H1 (cell line): ENCODE measurements at regions of chr3 and their contacts with region 1.

Region 1: GRCh38 chr3:107235928-107236315 is 141.3 kb upstream of the CCDC54 start:
- DNase-seq: no peak
- H3K4me3 ChIP-seq: no peak overlapping the region
- H3K27ac ChIP-seq: no peak overlapping the region
- H3K4me1 ChIP-seq: peaks cover 0 to 3% (median 0%) of the 10 kb centered on the region in 4 experiments; a peak in 1 of 7 replicates
- H3K27me3 ChIP-seq: peaks cover 0 to 3% (median 1%) of the 10 kb centered on the region in 4 experiments; a peak in 4 of 7 replicates
- CTCF ChIP-seq: peak in 2 of 3 experiments; percentile 72 to 75; a peak in 3 of 4 replicates
- EP300 ChIP-seq: no peak
- POLR2A ChIP-seq: no peak
- RAD21 ChIP-seq: peak; percentile 97

Region 2: DNA sequence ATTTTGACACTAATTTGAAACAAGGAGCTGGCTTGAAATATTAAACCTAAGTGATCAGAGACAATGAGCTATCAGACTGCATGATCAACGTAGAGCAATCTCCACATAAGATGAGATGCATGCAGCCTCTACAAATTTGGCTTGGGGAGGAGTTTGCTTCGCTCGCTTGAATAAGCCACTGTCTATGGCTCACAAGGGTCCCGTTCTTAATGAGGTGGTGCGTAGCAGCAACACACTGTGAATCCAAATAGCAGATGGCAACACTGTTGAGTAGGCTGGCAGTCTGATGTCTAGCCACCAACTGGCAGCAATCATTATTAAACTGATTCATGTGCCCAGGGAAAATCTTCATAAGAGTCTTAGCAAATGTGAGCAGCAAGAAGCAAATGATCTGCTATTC is 15.9 kb after region 1 on chr3:
- CTCF ChIA-PET with region 1: interaction called, 16 read pairs
- POLR2A ChIA-PET with region 1: interaction called, 3 read pairs
- DNase-seq: no peak
- H3K4me3 ChIP-seq: no peak overlapping the region
- H3K27ac ChIP-seq: no peak overlapping the region
- H3K4me1 ChIP-seq: no peaks in the 10 kb centered on the region
- H3K27me3 ChIP-seq: no peaks in the 10 kb centered on the region
- CTCF ChIP-seq: no peak
- EP300 ChIP-seq: no peak
- POLR2A ChIP-seq: no peak
- RAD21 ChIP-seq: no peak

Region 3: DNA sequence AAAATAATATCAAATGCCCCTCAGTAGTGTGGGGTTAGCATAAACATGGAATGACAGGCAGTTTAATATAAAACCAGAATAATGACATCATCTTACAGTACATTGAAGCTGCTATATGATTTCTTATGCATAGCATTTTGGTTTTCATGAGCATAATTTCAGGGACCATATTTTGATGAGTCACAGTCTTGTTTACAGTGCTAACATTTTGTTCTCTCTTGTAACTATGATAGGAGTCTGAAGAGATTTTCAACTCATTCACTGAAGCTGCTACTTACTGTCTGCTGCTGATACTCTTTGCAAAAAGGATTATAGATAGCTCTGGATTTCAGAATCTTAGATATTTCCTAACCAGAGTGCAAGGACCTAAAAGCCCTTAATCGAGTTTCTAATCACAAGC is 48.7 kb after region 1 on chr3:
- CTCF ChIA-PET with region 1: interaction called, 11 read pairs
- POLR2A ChIA-PET with region 1: no interaction called
- DNase-seq: no peak
- H3K4me3 ChIP-seq: no peak overlapping the region
- H3K27ac ChIP-seq: no peak overlapping the region
- H3K4me1 ChIP-seq: peaks cover 0 to 17% (median 8%) of the 10 kb centered on the region in 4 experiments; a peak in 6 of 7 replicates
- H3K27me3 ChIP-seq: no peaks in the 10 kb centered on the region
- CTCF ChIP-seq: no peak
- EP300 ChIP-seq: no peak
- POLR2A ChIP-seq: no peak
- RAD21 ChIP-seq: no peak

Region 4: DNA sequence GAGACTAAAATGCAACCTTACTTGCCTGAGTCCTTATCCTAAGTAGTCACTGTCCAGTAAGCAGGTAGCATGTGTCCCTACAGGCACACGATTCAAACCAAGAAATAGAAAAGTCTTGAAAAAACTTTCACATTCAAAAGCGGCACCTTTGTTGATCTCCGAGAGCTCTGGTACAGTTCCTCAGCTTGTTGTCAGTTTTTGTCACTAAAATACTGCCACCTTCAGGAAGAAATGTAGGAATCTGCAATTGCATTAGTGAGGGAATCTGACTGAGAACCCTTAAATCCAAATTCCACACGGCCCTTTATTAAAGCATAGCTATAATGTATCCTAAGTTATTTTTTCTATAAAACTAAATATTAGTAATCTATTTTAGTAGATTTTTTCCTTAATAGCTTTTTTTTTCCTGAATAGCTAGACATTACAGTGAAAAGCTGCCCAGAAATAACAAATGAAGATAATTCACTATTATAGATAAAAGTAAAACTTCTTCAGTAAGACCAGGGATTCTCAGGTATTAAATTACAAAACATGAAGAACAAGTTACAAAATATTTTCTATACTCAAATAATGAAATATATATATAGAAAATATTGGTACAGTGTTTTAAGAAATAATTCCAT is 185.4 kb after region 1 on chr3:
- CTCF ChIA-PET with region 1: interaction called, 24 read pairs
- POLR2A ChIA-PET with region 1: no interaction called
- DNase-seq: no peak
- H3K4me3 ChIP-seq: no peak overlapping the region
- H3K27ac ChIP-seq: no peak overlapping the region
- H3K4me1 ChIP-seq: no peaks in the 10 kb centered on the region
- H3K27me3 ChIP-seq: no peaks in the 10 kb centered on the region
- CTCF ChIP-seq: peak in 2 of 3 experiments; percentile 54 to 64; a peak in 3 of 4 replicates
- EP300 ChIP-seq: no peak
- POLR2A ChIP-seq: no peak
- RAD21 ChIP-seq: peak; percentile 59 to 69

Region 5: GRCh38 chr3:107512108-107512507 is 276.2 kb after region 1 on chr3:
- CTCF ChIA-PET with region 1: interaction called, 25 read pairs
- POLR2A ChIA-PET with region 1: no interaction called
- DNase-seq: no peak
- H3K4me3 ChIP-seq: no peak overlapping the region
- H3K27ac ChIP-seq: no peak overlapping the region
- H3K4me1 ChIP-seq: no peaks in the 10 kb centered on the region
- H3K27me3 ChIP-seq: no peaks in the 10 kb centered on the region
- CTCF ChIP-seq: peak in 2 of 3 experiments; percentile 27; a peak in 2 of 4 replicates
- EP300 ChIP-seq: no peak
- POLR2A ChIP-seq: no peak
- RAD21 ChIP-seq: peak; percentile 52 to 57

Region 6: DNA sequence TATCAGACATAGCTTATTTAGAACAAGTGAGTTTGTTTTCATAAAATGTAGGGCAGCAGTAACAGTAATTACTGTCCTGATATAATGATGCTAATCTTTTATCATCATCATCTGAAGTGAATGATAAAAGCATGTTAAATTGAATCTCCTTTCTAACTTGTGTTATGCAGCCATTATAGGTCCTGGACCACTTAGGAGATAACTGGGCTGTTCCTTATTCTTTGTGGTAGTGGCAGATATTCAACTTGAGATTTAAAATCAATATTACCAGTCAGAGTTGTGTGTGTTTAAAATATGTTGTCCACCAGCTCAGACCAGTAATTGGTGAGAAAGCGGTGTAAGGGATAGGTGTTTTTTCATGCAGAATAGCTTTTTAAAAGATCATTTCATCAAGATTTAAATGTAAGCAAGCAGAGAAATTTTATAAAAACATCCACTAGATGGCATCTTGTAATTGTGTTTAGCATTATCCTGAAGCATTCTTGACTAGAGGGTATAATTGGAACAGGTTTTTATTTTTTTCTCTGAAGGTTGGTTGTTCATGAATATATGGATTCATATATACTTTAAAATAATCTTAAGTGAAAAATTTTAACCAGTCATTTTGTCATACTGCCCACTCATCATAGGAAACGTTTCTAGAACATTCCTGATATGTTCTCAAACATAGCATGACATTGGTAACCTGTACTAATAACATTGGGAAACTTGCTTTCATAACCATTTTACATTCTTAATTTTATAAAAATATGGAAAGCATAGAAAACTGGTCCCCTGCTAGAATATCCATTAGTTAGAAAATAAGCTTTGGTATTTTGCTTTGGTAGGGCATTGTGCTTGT is 440.8 kb after region 1 on chr3:
- CTCF ChIA-PET with region 1: interaction called, 12 read pairs
- POLR2A ChIA-PET with region 1: no interaction called
- DNase-seq: no peak
- H3K4me3 ChIP-seq: no peak overlapping the region
- H3K27ac ChIP-seq: no peak overlapping the region
- H3K4me1 ChIP-seq: no peaks in the 10 kb centered on the region
- H3K27me3 ChIP-seq: no peaks in the 10 kb centered on the region
- CTCF ChIP-seq: peak in 1 of 3 experiments; percentile 34; a peak in 2 of 4 replicates
- EP300 ChIP-seq: no peak
- POLR2A ChIP-seq: no peak
- RAD21 ChIP-seq: peak in 1 of 2 experiments; percentile 42; a peak in 3 of 4 replicates